PC-9 (cell line): ENCODE measurements at regions of chr12 and their contacts with region 1.

Region 1: DNA sequence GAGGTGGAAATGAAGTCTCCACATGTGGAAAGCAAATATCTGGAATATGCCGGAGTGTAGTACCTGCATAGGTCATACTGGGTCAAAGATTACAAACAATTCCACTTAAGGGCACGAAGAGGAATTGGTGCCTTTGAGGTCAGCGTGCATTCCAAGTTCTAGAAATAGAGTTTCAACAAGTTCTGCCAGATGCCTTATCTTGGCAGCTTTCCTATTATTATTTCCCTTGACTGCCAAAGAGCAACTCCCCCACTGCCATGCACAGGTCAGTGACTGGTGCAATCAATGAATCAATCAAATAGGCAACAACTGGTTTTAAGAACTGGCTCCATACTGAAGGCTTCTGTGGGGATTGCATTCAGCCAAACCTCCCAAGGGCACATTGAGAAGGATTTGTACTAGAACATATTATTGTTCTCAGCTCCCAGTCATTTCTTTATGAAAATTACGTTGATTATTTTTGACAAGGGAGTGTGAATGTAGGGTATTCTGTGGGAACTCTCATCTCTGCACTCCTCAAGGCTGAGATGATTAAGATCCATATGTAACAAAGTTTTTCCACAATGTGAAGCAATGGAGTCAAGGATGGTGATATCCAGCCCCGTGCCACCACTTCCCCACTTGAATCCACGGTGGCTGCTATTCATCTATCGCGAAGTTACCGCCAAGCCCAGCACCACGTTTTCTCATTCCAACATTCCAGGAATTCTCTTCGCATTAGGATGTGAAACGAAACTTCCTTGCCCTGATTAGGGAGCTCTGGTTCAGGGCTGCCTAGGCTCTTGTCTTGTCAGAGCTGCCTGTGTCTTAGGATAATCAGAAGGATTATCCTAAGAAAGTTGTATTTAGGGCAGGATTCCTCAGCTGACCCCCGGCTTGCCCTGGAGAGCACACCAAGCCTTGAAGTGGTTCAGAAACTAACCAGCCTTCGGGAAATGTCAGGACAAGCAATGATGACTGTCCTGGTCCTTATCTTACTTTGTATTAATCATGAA is 115.1 kb upstream of the PCED1B start:
- DNase-seq: peak; percentile 66 to 93
- H3K4me3 ChIP-seq: no peak overlapping the region
- H3K27ac ChIP-seq: peak overlapping the region; percentile 60
- H3K4me1 ChIP-seq: peaks cover 43% of the 10 kb centered on the region
- H3K27me3 ChIP-seq: no peaks in the 10 kb centered on the region
- CTCF ChIP-seq: no peak

Region 2: DNA sequence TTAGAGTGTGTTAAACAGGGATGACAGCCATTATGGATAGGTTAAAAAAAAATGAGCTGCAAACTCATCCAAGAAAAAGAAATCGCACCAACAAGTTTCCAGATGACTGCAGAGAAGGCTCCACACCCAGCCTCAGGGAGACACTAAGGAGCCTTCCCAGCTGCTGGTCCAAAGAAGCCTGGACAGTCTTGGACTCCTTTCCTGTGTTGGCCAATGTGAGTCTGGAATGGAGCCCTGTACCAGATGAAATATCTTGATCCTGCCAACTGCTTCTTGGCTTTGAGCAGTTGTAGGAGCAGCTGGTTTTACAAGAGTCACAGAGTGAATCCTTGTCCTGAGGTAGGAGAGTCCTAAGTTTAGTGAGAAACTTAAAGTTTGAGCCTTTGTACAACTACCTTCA is 739.9 kb before region 1 on chr12:
- CTCF ChIA-PET with region 1: no interaction called
- POLR2A ChIA-PET with region 1: no interaction called
- intact Hi-C with region 1: no loop called
- DNase-seq: no peak
- H3K4me3 ChIP-seq: no peak overlapping the region
- H3K27ac ChIP-seq: no peak overlapping the region
- H3K4me1 ChIP-seq: peaks cover 41% of the 10 kb centered on the region
- H3K27me3 ChIP-seq: no peaks in the 10 kb centered on the region
- CTCF ChIP-seq: no peak

Region 3: DNA sequence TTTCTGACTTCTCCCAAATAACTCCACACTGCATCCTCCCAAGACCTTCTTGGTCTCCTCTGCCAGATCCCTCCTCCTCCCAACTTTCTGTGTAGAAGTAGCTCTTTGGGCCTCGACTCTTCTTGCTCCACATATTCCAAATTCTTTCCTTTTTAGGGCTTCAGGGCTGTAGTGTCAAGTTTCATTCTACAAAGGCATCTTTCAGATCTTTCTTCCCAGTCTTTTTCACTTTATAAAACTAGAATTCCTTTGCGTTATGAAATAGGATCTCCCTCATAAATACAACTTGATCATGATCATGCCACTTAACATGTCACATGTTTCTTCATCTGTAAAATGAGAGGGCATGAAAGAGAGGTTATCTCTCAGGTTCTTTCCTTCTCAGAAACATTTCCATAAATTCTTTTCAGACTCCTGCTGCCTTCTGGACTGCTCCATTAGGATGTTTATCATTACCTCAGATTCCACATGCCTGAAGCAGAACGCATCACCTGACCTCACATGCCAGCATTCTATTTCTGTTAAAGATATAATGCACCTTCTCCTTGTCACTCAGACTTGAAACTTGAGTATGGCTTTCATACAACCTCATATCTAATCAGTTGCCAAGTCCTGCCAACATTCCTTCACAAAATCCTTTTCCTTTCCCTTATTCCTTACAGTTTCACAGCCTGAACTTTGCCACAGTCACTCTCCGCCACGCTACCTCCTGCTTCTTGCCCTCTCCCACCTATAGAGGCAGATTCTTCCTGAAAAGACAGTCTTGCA is 703.9 kb before region 1 on chr12:
- CTCF ChIA-PET with region 1: no interaction called
- POLR2A ChIA-PET with region 1: no interaction called
- intact Hi-C with region 1: loop called (anchors 5 kb)
- DNase-seq: peak; percentile 39 to 75
- H3K4me3 ChIP-seq: peak overlapping the region; percentile 37
- H3K27ac ChIP-seq: peak overlapping the region; percentile 92
- H3K4me1 ChIP-seq: peaks cover 65% of the 10 kb centered on the region
- H3K27me3 ChIP-seq: no peaks in the 10 kb centered on the region
- CTCF ChIP-seq: no peak

Region 4: DNA sequence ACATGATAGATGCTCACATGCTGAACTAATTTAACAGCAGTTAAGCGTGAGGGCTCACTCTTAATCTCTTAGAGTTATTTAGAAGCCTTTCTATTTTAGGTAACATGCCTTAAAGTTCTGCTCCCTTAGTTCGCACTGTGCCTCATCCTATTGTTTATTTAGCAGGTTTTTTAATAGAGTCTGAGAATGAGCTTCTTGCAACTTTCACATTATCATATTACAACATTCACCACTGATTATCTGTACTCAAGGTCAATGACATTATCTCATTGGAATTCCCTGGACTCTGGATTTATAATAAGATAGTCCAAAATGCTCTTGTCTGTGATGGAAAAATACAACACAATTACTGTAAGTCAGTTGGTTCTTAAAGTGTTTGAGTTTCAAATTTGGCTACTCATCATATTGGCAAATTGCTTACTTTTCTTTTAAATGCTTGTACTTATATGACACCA is 408.1 kb before region 1 on chr12:
- CTCF ChIA-PET with region 1: no interaction called
- POLR2A ChIA-PET with region 1: no interaction called
- intact Hi-C with region 1: loop called (anchors 10 kb)
- DNase-seq: peak in 1 of 2 experiments; percentile 94
- H3K4me3 ChIP-seq: peak overlapping the region; percentile 40; the same call in 1 of the 2 replicates
- H3K27ac ChIP-seq: peak overlapping the region; percentile 94
- H3K4me1 ChIP-seq: peaks cover 68% of the 10 kb centered on the region
- H3K27me3 ChIP-seq: no peaks in the 10 kb centered on the region
- CTCF ChIP-seq: no peak

Region 5: GRCh38 chr12:46661110-46661845 is 303.0 kb before region 1 on chr12:
- CTCF ChIA-PET with region 1: no interaction called
- POLR2A ChIA-PET with region 1: no interaction called
- intact Hi-C with region 1: no loop called
- DNase-seq: peak; percentile 39 to 72
- H3K4me3 ChIP-seq: no peak overlapping the region
- H3K27ac ChIP-seq: peak overlapping the region; percentile 75
- H3K4me1 ChIP-seq: peaks cover 53% of the 10 kb centered on the region
- H3K27me3 ChIP-seq: no peaks in the 10 kb centered on the region
- CTCF ChIP-seq: peak; percentile 65

Region 6: DNA sequence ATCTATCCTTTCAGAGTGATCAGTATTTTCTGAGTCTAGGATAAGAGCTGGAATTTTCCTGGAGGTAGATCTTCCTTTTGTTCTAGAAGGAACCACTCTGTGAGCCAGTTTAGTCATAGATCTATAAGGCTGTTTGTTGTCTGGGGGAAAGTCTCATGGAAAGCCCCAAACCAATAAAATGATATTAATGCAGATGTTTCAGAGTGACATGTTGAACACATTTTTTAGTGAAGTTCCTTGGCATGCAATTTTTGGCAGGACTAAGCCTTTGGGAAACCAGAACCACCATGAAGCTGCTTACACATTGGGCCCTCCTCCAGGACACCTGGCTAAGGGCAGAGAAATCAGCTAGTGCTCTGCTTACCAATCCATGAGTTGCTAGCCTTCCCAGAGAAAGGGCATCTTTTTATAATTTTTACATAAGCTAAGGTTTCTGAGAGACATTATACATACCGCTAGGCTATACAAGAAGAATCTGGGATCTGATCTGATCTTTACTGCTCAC is 13.6 kb after region 1 on chr12:
- CTCF ChIA-PET with region 1: no interaction called
- POLR2A ChIA-PET with region 1: interaction called, 21 read pairs
- intact Hi-C with region 1: no loop called
- DNase-seq: no peak
- H3K4me3 ChIP-seq: no peak overlapping the region
- H3K27ac ChIP-seq: no peak overlapping the region
- H3K4me1 ChIP-seq: no peaks in the 10 kb centered on the region
- H3K27me3 ChIP-seq: no peaks in the 10 kb centered on the region
- CTCF ChIP-seq: no peak

Region 7: DNA sequence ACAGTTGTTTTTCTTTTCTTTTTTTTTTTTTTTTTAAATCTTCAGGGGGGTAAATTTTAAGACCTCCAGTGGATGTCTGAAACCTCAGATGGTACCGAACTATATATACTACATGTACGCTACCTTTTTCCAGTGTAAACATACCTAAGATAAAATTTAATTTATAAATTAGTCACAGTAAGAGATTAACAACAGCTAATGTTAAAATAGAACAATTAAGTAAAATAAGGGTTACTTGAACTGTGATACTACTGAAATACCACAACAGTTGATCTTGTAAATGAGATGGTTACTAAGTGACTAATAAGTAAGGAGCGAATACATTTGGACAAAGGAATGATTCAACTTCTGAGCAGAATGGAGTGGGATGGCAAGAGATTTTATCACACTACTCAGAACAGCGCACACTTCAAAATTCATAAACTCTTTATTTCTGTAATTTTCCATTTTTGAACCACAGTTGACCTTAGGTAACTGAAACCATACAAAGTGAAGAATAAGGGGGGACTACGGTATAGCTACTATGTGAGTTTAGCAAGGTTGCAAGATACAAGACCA is 34.6 kb after region 1 on chr12:
- CTCF ChIA-PET with region 1: no interaction called
- POLR2A ChIA-PET with region 1: no interaction called
- intact Hi-C with region 1: loop called (anchors 2 kb)
- DNase-seq: peak in 1 of 2 experiments; percentile 74
- H3K4me3 ChIP-seq: no peak overlapping the region
- H3K27ac ChIP-seq: 0 out of 2 replicates have a peak overlapping the region, but pooled peaks have one; percentile 35
- H3K4me1 ChIP-seq: peaks cover 14% of the 10 kb centered on the region
- H3K27me3 ChIP-seq: no peaks in the 10 kb centered on the region
- CTCF ChIP-seq: no peak

Region 8: GRCh38 chr12:47270782-47271664 is 306.7 kb after region 1 on chr12:
- CTCF ChIA-PET with region 1: no interaction called
- POLR2A ChIA-PET with region 1: no interaction called
- intact Hi-C with region 1: loop called (anchors 5 kb)
- DNase-seq: peak; percentile 70 to 99
- H3K4me3 ChIP-seq: peak overlapping the region; percentile 41; the same call in 1 of the 2 replicates
- H3K27ac ChIP-seq: peak overlapping the region; percentile 100
- H3K4me1 ChIP-seq: peaks cover 76% of the 10 kb centered on the region
- H3K27me3 ChIP-seq: no peaks in the 10 kb centered on the region
- CTCF ChIP-seq: no peak